ENCODE measurements at regions of chr11 and their contacts with region 1.

Region 1: DNA sequence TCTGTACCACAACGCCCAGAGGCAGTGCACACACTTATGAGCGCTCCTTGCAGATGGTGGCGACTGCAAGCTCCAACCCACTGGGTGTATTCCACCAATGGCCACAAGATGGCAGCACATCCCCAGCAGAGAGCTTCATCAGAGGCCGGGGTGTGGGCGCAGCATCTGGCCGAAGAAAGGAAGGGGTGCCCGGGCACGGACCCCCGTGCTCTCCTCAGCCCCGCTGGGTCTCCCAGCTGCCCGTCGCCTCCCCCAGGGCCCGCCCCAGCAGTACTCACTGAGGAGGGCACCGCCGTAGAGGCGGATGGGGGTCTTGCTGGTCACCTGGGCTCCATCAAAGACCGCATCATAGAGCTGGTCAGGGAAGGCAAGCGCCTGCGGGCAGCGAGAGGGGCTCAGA is 14.2 kb downstream of the TP53I11 start:
- DNase-seq: peak; percentile 89
- H3K4me3 Mint-ChIP-seq: no peak overlapping the region
- H3K27ac Mint-ChIP-seq: no peak overlapping the region
- H3K4me1 Mint-ChIP-seq: no peaks in the 10 kb centered on the region
- H3K27me3 Mint-ChIP-seq: no peaks in the 10 kb centered on the region

Region 2: DNA sequence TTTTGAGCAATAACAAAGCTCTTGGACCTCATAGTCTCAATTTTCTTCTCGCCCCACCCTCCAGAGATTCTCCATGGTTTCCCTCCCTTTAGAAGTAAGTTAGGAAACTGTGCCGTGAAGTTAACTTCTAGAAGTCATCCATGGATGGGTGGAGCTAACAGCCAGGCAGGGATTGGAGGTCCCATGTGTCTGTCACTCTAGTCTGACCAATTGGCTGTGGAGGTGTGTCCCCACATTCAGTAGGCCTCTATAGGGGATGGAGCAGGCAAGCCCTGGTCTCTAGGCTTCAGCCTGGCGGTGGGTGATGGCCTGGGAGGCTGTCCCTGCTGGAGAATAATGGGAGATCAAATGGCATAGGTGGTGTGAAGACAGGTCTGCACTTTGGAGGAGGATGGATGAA is 36.6 kb before region 1 on chr11:
- CTCF ChIA-PET with region 1: no interaction called
- POLR2A ChIA-PET with region 1: no interaction called
- intact Hi-C with region 1: no loop called
- DNase-seq: peak; percentile 69
- H3K4me3 Mint-ChIP-seq: no peak overlapping the region
- H3K27ac Mint-ChIP-seq: no peak overlapping the region
- H3K4me1 Mint-ChIP-seq: peaks cover 4% of the 10 kb centered on the region
- H3K27me3 Mint-ChIP-seq: no peaks in the 10 kb centered on the region

Region 3: DNA sequence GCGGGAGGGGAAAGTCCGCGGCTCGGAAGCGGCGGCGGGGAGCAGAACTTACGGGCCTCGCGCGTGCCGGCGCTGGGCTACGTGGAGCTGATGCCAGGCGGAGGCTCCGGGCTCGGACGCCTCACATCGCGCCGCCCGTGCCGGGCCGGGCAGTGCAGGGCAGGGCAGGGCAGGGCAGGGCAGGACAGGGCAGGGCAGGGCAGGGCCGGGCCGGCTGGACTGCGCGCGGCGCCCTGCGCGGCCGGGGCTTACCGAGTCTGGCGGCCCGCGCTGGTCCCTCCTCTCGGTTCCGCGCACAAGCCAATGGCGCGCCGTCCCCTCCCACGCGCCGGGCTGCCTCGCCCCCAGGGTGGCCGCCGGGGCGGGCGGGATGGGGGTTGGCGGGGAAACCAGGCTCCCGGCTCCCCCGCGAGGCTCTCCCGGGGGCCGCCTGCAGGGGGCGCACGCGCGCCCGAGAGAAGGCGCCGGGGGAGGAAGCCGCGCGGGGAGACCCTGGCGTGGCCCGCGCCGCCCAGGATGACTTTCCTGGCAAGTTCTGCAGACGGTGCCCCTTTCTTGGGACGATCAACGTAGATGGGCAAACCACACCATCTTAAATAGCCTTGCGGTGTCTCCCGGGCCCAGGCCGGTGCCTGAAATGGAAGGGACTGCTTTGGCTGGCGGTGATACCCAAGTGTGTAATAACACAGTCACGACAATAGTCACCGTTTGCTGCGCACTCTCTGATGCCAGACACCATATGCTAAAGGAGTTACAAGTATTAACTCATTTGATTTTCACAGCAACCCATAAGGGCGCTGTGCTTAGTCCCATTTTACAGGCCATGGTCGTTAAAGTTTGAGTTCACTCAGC is 14.3 kb after region 1 on chr11 and contains the start of gene TP53I11:
- CTCF ChIA-PET with region 1: interaction called, 19 read pairs
- POLR2A ChIA-PET with region 1: interaction called, 3 read pairs
- intact Hi-C with region 1: no loop called
- DNase-seq: peak; percentile 82
- H3K4me3 Mint-ChIP-seq: peak within 1 kb of the TSS; percentile 76
- H3K27ac Mint-ChIP-seq: no peak within 1 kb of the TSS
- H3K4me1 Mint-ChIP-seq: peaks cover 6% of the 10 kb centered on the region
- H3K27me3 Mint-ChIP-seq: no peaks in the 10 kb centered on the region
- total RNA-seq, gene TP53I11: 15.7 to 17.6 TPM

Region 4: GRCh38 chr11:44957776-44958564 is 21.4 kb after region 1 on chr11:
- CTCF ChIA-PET with region 1: interaction called, 13 read pairs
- POLR2A ChIA-PET with region 1: no interaction called
- intact Hi-C with region 1: no loop called
- DNase-seq: no peak
- H3K4me3 Mint-ChIP-seq: no peak overlapping the region
- H3K27ac Mint-ChIP-seq: no peak overlapping the region
- H3K4me1 Mint-ChIP-seq: peaks cover 6% of the 10 kb centered on the region
- H3K27me3 Mint-ChIP-seq: no peaks in the 10 kb centered on the region

Region 5: GRCh38 chr11:44964526-44965209 is 28.1 kb after region 1 on chr11:
- CTCF ChIA-PET with region 1: interaction called, 11 read pairs
- POLR2A ChIA-PET with region 1: no interaction called
- intact Hi-C with region 1: no loop called
- DNase-seq: no peak
- H3K4me3 Mint-ChIP-seq: no peak overlapping the region
- H3K27ac Mint-ChIP-seq: no peak overlapping the region
- H3K4me1 Mint-ChIP-seq: no peaks in the 10 kb centered on the region
- H3K27me3 Mint-ChIP-seq: no peaks in the 10 kb centered on the region

Region 6: DNA sequence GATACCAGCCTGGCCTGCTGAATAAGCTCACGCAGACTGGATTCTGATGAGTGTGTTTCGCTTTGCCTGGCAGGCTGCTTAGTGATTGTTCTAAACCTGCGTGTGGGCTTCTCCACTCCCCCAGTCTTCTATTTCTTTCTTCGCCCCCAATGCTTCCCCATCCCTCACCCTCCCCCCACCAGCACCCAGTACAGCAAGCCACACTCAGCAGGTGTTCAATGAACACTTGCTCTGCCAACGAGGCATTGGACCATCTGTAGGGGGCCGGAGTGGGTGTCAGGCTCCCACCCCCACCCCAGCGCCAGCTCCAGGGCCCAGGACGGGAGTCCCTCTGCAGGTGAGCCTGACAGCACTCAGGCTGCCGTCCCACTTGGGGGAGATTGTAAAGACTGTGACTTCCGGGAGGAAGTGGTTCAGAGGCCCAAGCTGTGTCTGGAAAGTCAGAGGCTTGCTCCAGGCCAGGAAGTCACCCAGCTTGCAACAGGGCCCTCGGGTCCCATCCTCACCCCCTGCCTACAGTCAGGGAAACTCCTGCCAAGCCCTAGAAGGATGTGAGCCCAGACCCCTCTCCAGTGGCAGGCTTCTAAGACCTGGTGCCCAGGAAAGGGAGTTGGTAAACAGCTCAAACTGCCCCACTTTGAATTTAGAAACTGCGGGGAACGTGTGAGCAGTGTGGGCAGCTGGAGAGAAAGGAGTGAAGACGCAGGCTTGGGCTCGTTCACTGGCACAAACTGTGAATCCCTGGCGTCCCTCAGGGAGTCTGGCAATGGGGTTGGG is 143.6 kb after region 1 on chr11:
- CTCF ChIA-PET with region 1: interaction called, 18 read pairs
- POLR2A ChIA-PET with region 1: no interaction called
- intact Hi-C with region 1: no loop called
- DNase-seq: peak; percentile 75
- H3K4me3 Mint-ChIP-seq: peak overlapping the region; percentile 42
- H3K27ac Mint-ChIP-seq: peak overlapping the region; percentile 85
- H3K4me1 Mint-ChIP-seq: peaks cover 35% of the 10 kb centered on the region
- H3K27me3 Mint-ChIP-seq: no peaks in the 10 kb centered on the region

Region 7: DNA sequence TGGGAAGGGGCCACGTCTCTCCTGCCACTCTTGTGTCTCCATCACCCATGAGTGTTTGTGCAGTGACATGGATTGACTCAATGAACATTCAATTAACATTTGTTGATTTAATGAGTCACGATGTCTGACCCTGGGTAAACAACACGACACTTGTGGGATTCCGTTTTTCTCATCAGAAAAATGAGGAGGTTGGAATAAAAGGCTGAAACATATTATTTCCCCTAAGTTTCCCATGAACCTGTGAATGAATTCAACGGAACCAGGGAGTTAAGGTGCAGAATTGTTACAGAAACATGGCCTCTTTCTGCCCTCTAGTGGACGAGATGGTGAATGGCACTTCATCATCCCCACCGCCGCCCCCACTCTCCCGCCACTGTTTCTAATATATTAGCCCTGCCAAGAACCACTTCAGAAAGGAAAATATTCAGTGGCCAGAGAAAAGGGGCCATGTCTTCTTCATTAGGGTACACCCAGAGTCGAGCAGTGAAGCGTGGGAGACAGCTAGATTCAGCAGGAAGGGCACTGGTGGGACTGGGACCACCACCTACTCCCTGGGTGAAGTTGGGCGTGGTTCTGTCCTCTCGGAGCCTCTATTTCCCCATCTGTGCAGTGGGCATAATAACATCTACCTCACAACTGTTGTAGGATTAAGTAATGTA is 395.9 kb after region 1 on chr11:
- CTCF ChIA-PET with region 1: interaction called, 8 read pairs
- POLR2A ChIA-PET with region 1: no interaction called
- intact Hi-C with region 1: loop called (anchors 5 kb)
- DNase-seq: peak; percentile 49
- H3K4me3 Mint-ChIP-seq: no peak overlapping the region
- H3K27ac Mint-ChIP-seq: no peak overlapping the region
- H3K4me1 Mint-ChIP-seq: no peaks in the 10 kb centered on the region
- H3K27me3 Mint-ChIP-seq: peaks cover 3% of the 10 kb centered on the region

Measured in activated CD4-positive, alpha-beta memory T cell treated with anti-CD3 and anti-CD28 coated beads for 36 hours (primary cell).